GM12878 (cell line): ENCODE measurements at regions of chr14 and their contacts with region 1.

Region 1: GRCh38 chr14:45267071-45267470 is 14.1 kb upstream of the MIS18BP1 start:
- DNase-seq: no peak
- ATAC-seq: no peak
- H3K4me3 ChIP-seq: no peak overlapping the region
- H3K27ac ChIP-seq: no peak overlapping the region
- H3K4me1 ChIP-seq: no peaks in the 10 kb centered on the region
- H3K27me3 ChIP-seq: no peaks in the 10 kb centered on the region
- CTCF ChIP-seq: no peak
- EP300 ChIP-seq: no peak
- POLR2A ChIP-seq: no peak
- RAD21 ChIP-seq: no peak

Region 2: GRCh38 chr14:44846232-44846824 is 420.7 kb before region 1 on chr14:
- CTCF ChIA-PET with region 1: interaction called, 13 read pairs
- POLR2A ChIA-PET with region 1: no interaction called
- RAD21 ChIA-PET with region 1: interaction called, 9 read pairs
- SMC1A ChIA-PET with region 1: interaction called, 3 read pairs
- in situ Hi-C with region 1: no loop called
- intact Hi-C with region 1: no loop called
- DNase-seq: peak; percentile 27
- ATAC-seq: peak; percentile 79
- H3K4me3 ChIP-seq: no peak overlapping the region
- H3K27ac ChIP-seq: no peak overlapping the region
- H3K4me1 ChIP-seq: no peaks in the 10 kb centered on the region
- H3K27me3 ChIP-seq: no peaks in the 10 kb centered on the region
- CTCF ChIP-seq: peak; percentile 83 to 89 (median 85)
- EP300 ChIP-seq: no peak
- POLR2A ChIP-seq: no peak
- RAD21 ChIP-seq: peak; percentile 83

Region 3: GRCh38 chr14:44912041-44912869 is 354.8 kb before region 1 on chr14:
- CTCF ChIA-PET with region 1: interaction called, 46 read pairs
- POLR2A ChIA-PET with region 1: no interaction called
- RAD21 ChIA-PET with region 1: interaction called, 28 read pairs
- SMC1A ChIA-PET with region 1: interaction called, 38 read pairs
- in situ Hi-C with region 1: no loop called
- intact Hi-C with region 1: loop called (anchors 1 kb)
- DNase-seq: no peak
- ATAC-seq: no peak
- H3K4me3 ChIP-seq: no peak overlapping the region
- H3K27ac ChIP-seq: no peak overlapping the region
- H3K4me1 ChIP-seq: no peaks in the 10 kb centered on the region
- H3K27me3 ChIP-seq: no peaks in the 10 kb centered on the region
- CTCF ChIP-seq: no peak
- EP300 ChIP-seq: no peak
- POLR2A ChIP-seq: no peak
- RAD21 ChIP-seq: no peak

Region 4: DNA sequence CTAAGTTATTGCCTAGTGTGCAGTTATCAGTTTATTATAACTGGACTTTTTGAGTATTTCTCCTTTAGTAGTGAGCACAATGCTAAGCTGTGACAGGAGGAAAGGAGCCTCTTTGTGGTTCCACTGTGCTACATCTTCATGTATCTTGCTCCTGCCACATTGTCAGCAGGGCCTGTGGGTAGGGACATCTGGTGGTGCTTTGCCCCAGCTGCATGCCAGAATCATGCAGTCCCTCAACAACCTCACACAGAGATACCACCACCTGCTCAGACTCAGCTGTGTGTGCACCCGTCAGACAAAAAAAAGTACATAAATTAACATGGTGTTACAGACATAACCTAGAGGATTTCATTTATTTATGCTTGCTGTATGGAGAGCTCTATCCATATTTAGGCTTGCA is 65.2 kb before region 1 on chr14:
- CTCF ChIA-PET with region 1: interaction called, 10 read pairs
- POLR2A ChIA-PET with region 1: no interaction called
- RAD21 ChIA-PET with region 1: no interaction called
- SMC1A ChIA-PET with region 1: interaction called, 6 read pairs
- in situ Hi-C with region 1: no loop called
- intact Hi-C with region 1: no loop called
- DNase-seq: no peak
- ATAC-seq: peak; percentile 86
- H3K4me3 ChIP-seq: no peak overlapping the region
- H3K27ac ChIP-seq: no peak overlapping the region
- H3K4me1 ChIP-seq: no peaks in the 10 kb centered on the region
- H3K27me3 ChIP-seq: no peaks in the 10 kb centered on the region
- CTCF ChIP-seq: peak; percentile 37 to 45 (median 37); a peak in 4 of 6 replicates
- EP300 ChIP-seq: no peak
- POLR2A ChIP-seq: peak; percentile 39; the same call in 1 of the 2 replicates
- RAD21 ChIP-seq: peak; percentile 50

Region 5: GRCh38 chr14:45253068-45253753 is 13.9 kb before region 1 on chr14 and contains the start of gene MIS18BP1:
- CTCF ChIA-PET with region 1: interaction called, 21 read pairs
- POLR2A ChIA-PET with region 1: interaction called, 3 read pairs
- RAD21 ChIA-PET with region 1: interaction called, 4 read pairs
- SMC1A ChIA-PET with region 1: interaction called, 9 read pairs
- in situ Hi-C with region 1: no loop called
- intact Hi-C with region 1: no loop called
- DNase-seq: peak; percentile 81
- ATAC-seq: peak; percentile 85
- H3K4me3 ChIP-seq: peak within 1 kb of the TSS; percentile 98
- H3K27ac ChIP-seq: peak within 1 kb of the TSS; percentile 85
- H3K4me1 ChIP-seq: peaks cover 8% of the 10 kb centered on the region
- H3K27me3 ChIP-seq: no peaks in the 10 kb centered on the region
- CTCF ChIP-seq: peak; percentile 80 to 95 (median 90)
- EP300 ChIP-seq: peak in 1 of 2 experiments; percentile 62; a peak in 1 of 4 replicates
- POLR2A ChIP-seq: peak; percentile 82
- RAD21 ChIP-seq: peak; percentile 49
- polyA plus RNA-seq, gene MIS18BP1: 16.9 to 17.7 TPM